ENCODE measurements at regions of chr9 and their contacts with region 1.

Region 1: GRCh38 chr9:71911253-71912074 is at the start of gene C9orf85:
- DNase-seq: peak; percentile 98
- ATAC-seq: peak; percentile 94
- H3K4me3 Mint-ChIP-seq: peak within 1 kb of the TSS; percentile 98
- H3K27ac Mint-ChIP-seq: peak within 1 kb of the TSS; percentile 94
- H3K4me1 Mint-ChIP-seq: peaks cover 59% of the 10 kb centered on the region
- H3K27me3 Mint-ChIP-seq: no peaks in the 10 kb centered on the region
- total RNA-seq, gene C9orf85: 10.2 to 10.4 TPM

Region 2: DNA sequence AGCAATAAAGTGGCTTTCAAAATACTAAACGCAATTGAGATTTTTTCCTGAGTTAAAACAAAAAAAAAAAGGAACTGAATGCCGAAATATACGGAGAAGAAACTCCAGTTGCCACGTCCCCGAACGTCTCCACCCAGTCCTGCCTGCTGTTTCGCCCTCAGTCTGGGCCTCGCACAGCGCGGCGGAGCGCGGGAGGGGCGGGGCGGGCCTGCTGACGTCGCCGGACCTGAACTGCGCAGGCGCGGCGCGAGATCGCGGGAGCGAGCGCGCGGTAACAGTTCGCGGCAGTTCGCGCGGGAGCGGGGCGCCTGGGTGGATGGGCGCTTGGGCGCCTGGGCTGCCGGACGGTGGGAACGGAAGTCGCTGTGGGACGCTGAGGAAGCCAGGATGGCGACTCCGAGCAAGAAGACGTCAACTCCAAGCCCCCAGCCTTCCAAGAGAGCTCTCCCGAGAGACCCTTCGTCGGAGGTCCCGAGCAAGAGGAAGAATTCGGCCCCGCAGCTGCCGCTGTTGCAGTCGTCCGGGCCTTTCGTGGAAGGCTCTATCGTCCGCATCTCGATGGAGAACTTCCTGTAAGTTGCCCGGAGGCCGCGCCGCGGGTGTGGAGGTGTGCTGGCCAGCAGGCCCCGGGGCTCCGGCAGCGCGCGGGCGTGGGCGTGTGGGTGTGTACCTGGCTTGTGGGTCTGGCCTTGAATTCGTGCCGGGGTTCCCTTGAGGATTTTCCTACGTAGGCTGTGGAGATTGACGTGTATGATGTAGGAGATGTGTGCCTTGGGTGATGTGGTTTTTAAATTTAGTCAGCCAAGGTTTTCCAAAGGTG is 1652.6 kb before region 1 on chr9 and contains the start of gene SMC5:
- CTCF ChIA-PET with region 1: no interaction called
- POLR2A ChIA-PET with region 1: no interaction called
- intact Hi-C with region 1: loop called in 1 of 2 experiments (anchors 5 kb)
- DNase-seq: peak; percentile 92
- ATAC-seq: peak; percentile 83
- H3K4me3 Mint-ChIP-seq: peak within 1 kb of the TSS; percentile 89
- H3K27ac Mint-ChIP-seq: peak within 1 kb of the TSS; percentile 96
- H3K4me1 Mint-ChIP-seq: peaks cover 54% of the 10 kb centered on the region
- H3K27me3 Mint-ChIP-seq: no peaks in the 10 kb centered on the region
- total RNA-seq, gene SMC5: 39.0 to 43.0 TPM

Region 3: DNA sequence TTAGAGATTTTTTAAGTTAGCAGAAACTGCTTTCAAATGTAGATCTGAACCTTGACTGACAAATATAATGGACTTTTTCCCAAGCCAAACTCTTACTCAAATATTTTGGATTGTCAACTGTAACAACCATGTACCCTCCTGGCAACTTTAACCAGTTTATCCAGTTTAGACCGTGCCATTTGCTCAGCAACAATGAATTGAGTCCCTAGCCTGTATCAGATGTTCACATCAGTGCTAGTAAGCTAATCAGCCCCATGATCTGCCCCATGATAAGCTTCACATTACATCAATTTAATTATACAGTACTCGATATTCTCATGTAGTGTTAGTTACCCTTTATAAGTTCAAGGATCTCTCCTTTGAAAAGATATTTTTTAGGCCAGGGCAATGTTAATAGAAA is 513.6 kb before region 1 on chr9:
- CTCF ChIA-PET with region 1: no interaction called
- POLR2A ChIA-PET with region 1: no interaction called
- intact Hi-C with region 1: no loop called
- DNase-seq: no peak
- ATAC-seq: no peak
- H3K4me3 Mint-ChIP-seq: no peak overlapping the region
- H3K27ac Mint-ChIP-seq: no peak overlapping the region
- H3K4me1 Mint-ChIP-seq: no peaks in the 10 kb centered on the region
- H3K27me3 Mint-ChIP-seq: peaks cover 5% of the 10 kb centered on the region

Region 4: GRCh38 chr9:71549023-71549422 is 362.4 kb before region 1 on chr9:
- CTCF ChIA-PET with region 1: no interaction called
- POLR2A ChIA-PET with region 1: no interaction called
- intact Hi-C with region 1: no loop called
- DNase-seq: no peak
- ATAC-seq: no peak
- H3K4me3 Mint-ChIP-seq: no peak overlapping the region
- H3K27ac Mint-ChIP-seq: no peak overlapping the region
- H3K4me1 Mint-ChIP-seq: no peaks in the 10 kb centered on the region
- H3K27me3 Mint-ChIP-seq: peaks cover 23% of the 10 kb centered on the region

Region 5: DNA sequence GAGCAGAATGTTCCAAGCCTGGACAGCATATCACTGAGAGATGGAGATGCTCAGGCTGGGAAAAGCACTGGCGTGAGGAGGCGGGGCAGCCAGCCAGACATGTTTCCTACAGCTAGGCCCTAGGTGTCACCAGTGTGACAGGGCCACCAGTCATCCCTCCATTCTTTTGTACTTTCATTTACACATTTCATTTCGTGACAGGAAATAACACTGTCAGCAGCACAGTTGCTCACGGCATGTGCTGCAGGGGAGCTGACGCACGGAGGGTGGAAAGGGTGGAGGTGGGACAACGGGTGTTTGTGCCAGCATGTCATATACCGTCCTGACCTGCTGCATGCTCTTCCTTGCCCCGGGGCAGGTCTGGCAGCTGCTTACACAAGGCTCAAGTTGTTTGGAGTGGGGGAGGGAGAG is 128.3 kb before region 1 on chr9:
- CTCF ChIA-PET with region 1: interaction called, 3 read pairs
- POLR2A ChIA-PET with region 1: no interaction called
- intact Hi-C with region 1: loop called (anchors 1 kb)
- DNase-seq: peak; percentile 93
- ATAC-seq: peak; percentile 97
- H3K4me3 Mint-ChIP-seq: peak overlapping the region; percentile 68
- H3K27ac Mint-ChIP-seq: peak overlapping the region; percentile 98
- H3K4me1 Mint-ChIP-seq: peaks cover 48% of the 10 kb centered on the region
- H3K27me3 Mint-ChIP-seq: no peaks in the 10 kb centered on the region

Region 6: GRCh38 chr9:71853084-71853483 is 58.4 kb before region 1 on chr9:
- CTCF ChIA-PET with region 1: no interaction called
- POLR2A ChIA-PET with region 1: no interaction called
- intact Hi-C with region 1: loop called (anchors 1 to 2 kb)
- DNase-seq: no peak
- ATAC-seq: peak; percentile 92
- H3K4me3 Mint-ChIP-seq: no peak overlapping the region
- H3K27ac Mint-ChIP-seq: no peak overlapping the region
- H3K4me1 Mint-ChIP-seq: peaks cover 14% of the 10 kb centered on the region
- H3K27me3 Mint-ChIP-seq: no peaks in the 10 kb centered on the region

Region 7: DNA sequence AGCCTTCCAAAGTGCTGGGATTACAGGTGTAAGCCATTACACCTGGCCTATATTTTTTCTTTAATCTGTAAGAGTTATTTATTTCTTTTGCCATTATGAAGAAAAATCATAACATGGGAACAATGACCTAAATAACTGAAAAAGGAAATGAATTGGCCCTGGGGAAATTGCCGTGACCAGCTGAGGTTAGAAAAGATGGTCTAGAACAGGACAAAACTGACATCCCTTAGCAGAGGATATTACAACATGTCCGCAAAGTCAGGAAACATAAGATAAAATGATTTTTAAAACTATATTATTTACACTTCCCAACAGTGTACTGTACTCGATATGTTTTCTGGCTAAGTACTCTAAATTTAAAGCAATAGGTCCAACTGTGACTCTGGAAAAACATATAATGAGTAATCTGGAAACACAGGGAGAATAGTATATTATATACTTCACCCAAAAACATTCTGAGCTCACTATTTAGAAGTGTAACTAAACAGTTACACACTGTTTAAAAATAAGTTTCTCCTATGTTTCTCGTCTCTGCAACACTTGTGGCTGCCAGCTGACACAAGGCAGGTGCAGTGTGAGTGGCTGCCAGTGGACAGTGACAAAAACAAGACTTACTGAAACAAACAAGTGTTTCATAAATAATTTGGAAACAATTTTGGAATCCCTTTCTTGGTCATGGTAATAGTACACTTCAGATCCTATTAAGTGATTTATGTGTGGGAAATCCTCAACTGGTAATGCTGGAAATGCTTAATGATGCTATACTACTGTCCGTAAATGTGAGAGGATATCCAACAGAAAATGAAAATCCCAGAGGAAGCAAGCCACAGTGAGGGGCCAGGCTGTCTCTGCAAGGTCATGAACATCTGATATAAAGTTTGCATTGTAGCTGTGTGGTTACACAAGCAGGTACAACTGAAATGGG is 69.1 kb after region 1 on chr9:
- CTCF ChIA-PET with region 1: no interaction called
- POLR2A ChIA-PET with region 1: no interaction called
- intact Hi-C with region 1: no loop called
- DNase-seq: no peak
- ATAC-seq: no peak
- H3K4me3 Mint-ChIP-seq: no peak overlapping the region
- H3K27ac Mint-ChIP-seq: no peak overlapping the region
- H3K4me1 Mint-ChIP-seq: no peaks in the 10 kb centered on the region
- H3K27me3 Mint-ChIP-seq: no peaks in the 10 kb centered on the region

Region 8: GRCh38 chr9:72364679-72365524 is 453.4 kb after region 1 on chr9 and contains the start of gene ZFAND5:
- CTCF ChIA-PET with region 1: no interaction called
- POLR2A ChIA-PET with region 1: interaction called, 4 read pairs
- intact Hi-C with region 1: loop called (anchors 1 to 2 kb)
- DNase-seq: peak; percentile 97
- ATAC-seq: peak; percentile 84
- H3K4me3 Mint-ChIP-seq: peak within 1 kb of the TSS; percentile 91
- H3K27ac Mint-ChIP-seq: peak within 1 kb of the TSS; percentile 99
- H3K4me1 Mint-ChIP-seq: peaks cover 37% of the 10 kb centered on the region
- H3K27me3 Mint-ChIP-seq: no peaks in the 10 kb centered on the region
- total RNA-seq, gene ZFAND5: 72.0 to 88.2 TPM

Region 9: DNA sequence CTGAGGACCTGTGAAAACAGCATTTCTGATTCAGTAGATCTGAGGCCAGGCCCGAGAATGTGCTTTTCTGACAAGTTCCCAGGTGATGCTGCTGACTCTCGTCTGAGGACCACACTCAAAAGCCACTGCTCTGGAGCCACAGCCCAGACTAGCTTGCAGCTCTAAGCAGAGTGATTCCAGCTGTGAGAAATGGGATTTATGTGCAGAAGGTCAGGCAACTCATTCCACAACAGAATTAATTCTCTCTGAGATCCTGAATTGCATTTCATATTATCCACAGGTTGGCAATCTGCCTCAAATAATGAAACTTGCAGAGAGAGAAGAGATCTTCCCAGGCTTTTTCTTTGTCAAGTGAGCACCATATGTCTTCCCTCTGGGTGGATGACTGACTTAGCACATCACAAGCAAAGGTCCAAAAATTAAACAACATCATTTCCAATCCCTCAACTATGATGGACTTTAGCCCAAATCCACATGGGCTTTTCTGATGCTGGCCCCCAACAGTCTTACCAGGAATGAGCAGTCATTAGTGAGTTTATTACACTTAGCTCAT is 901.2 kb after region 1 on chr9:
- CTCF ChIA-PET with region 1: no interaction called
- POLR2A ChIA-PET with region 1: no interaction called
- intact Hi-C with region 1: no loop called
- DNase-seq: no peak
- ATAC-seq: no peak
- H3K4me3 Mint-ChIP-seq: no peak overlapping the region
- H3K27ac Mint-ChIP-seq: no peak overlapping the region
- H3K4me1 Mint-ChIP-seq: no peaks in the 10 kb centered on the region
- H3K27me3 Mint-ChIP-seq: peaks cover 3% of the 10 kb centered on the region

Region 10: DNA sequence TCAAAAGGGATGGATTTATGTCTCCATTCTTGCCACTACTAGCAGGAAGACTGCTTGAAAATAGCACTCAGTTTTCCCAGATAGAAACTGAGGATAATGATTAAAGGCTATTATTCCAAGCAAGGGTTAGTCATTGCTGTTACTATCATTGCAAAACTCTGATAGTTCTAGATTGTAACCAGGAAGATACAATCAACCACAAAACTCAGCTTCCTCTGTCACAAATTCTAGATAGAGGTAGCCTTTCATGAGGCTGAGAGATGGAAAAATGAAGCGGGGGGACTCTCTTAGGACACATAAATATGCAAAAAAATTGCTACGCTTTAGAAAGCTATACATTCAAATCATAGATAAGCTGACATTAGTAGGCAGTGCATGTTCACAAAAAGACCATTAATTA is 1243.3 kb after region 1 on chr9:
- CTCF ChIA-PET with region 1: no interaction called
- POLR2A ChIA-PET with region 1: no interaction called
- intact Hi-C with region 1: loop called in 1 of 2 experiments (anchors 5 kb)
- DNase-seq: no peak
- ATAC-seq: peak; percentile 39
- H3K4me3 Mint-ChIP-seq: peak overlapping the region; percentile 70
- H3K27ac Mint-ChIP-seq: peak overlapping the region; percentile 94
- H3K4me1 Mint-ChIP-seq: peaks cover 86% of the 10 kb centered on the region
- H3K27me3 Mint-ChIP-seq: no peaks in the 10 kb centered on the region